ENCODE measurements at regions of chr20 and their contacts with region 1.

Region 1: GRCh38 chr20:43749734-43750294 is 23.0 kb upstream of the GTSF1L start:
- DNase-seq: peak; percentile 84
- CTCF ChIP-seq: peak; percentile 99

Region 2: GRCh38 chr20:43717616-43717995 is 32.2 kb before region 1 on chr20:
- CTCF ChIA-PET with region 1: no interaction called
- POLR2A ChIA-PET with region 1: no interaction called
- DNase-seq: no peak
- CTCF ChIP-seq: no peak

Region 3: GRCh38 chr20:43728044-43728529 is 21.7 kb before region 1 on chr20:
- CTCF ChIA-PET with region 1: interaction called, 62 read pairs
- POLR2A ChIA-PET with region 1: no interaction called
- DNase-seq: no peak
- CTCF ChIP-seq: no peak

Region 4: DNA sequence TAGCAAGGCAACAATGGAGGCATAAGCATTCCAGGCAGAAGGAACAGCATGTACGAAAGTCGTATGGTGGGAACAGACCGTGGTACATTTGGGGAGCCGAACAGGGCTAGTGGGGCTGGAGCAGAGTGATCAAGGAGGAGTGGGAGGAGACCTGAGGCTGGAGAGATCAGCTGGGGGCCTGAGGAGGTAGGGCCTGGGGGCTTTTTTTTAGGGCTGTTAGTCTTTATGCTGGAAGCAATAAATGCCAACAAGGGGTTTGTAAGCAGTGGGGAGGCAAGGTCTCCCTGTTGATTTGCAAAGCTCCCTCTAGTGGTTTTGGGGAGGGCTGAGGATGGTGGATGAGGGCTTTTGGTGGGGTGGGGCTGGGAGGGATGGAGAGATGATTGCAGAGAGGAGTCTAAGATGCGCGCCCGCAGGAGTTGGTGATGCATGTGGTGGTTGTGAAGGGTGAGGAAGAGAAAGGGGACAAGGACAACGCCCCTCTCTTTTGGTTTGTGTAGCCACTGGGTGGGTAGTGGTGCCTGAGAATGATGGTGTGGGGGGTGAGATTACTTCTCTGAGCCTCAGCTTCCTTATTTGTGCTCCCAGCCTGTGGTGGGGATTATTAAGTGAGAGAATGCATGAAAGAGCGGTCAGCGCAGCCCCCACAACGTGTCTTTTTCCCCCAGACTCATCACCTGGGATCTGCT is 90.7 kb after region 1 on chr20:
- CTCF ChIA-PET with region 1: interaction called, 13 read pairs
- POLR2A ChIA-PET with region 1: no interaction called
- DNase-seq: peak; percentile 75
- CTCF ChIP-seq: peak; percentile 45

Region 5: GRCh38 chr20:44001667-44002596 is 252.1 kb after region 1 on chr20:
- CTCF ChIA-PET with region 1: interaction called, 10 read pairs
- POLR2A ChIA-PET with region 1: no interaction called
- DNase-seq: peak; percentile 41
- CTCF ChIP-seq: no peak

Region 6: DNA sequence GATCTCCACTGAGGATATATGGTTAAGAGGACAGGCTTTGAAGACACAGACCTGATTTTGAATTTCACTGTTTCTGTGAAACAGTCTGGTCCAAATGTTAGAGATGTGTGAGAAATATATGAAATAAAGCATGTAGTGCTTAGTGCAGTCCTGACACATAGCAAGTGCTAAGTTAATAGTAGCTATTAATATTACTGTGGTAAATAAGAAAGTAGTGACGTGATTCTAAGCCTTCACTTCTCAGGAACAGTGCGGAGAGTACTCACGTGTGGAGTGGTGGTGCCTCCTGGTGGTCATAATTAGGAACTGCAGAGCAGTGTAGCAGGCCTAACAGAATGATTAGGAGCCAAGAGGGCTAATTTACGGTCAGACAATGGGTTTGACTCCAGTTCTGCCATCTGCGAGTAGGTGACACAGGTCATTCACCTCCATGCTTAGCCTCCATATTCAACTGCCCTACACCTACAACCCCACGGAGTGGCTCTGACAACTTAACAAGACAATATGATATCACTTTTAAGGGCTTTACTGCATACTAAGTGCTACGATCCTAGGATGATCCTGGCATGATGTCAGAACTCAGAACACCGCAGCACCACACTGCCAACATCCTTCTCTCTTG is 330.9 kb after region 1 on chr20:
- CTCF ChIA-PET with region 1: interaction called, 157 read pairs
- POLR2A ChIA-PET with region 1: no interaction called
- DNase-seq: peak; percentile 86
- CTCF ChIP-seq: peak; percentile 95